ENCODE measurements at regions of chr5 and their contacts with region 1.

Region 1: DNA sequence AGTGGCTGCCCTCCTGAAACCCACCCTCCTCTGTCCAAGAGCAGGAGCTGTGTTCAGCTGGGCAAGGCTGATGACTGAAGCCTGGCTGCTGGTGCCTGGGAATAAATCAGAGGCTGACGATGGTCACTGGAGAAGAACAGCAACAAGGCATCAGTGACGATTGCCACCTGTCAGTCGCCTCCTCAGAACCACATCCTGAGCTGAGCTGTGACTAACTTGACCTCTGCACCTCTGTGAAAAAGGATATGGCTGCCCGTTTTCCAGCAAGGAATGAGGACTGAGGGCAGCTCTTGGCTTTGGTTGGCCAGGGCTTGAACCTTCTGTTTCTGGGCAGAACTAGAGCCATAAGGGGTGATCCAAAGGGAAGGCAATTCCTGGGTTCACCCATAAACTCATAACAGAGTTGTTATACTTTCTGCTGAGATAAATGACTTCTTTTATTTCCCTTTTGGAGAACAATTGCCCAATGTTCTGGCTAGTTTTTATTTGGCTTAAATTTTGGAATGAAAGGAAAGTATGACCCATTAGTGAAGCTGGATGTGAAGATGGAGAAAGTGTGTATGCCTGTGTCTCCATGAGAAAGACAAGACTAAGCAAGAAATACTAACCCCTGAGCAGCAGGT is 40.1 kb downstream of the TRIP13 start:
- DNase-seq: peak; percentile 40
- ATAC-seq: peak; percentile 82
- H3K4me3 ChIP-seq: no peak overlapping the region
- H3K27ac ChIP-seq: peak overlapping the region; percentile 1; the same call in 1 of the 2 replicates
- H3K4me1 ChIP-seq: peaks cover 7% of the 10 kb centered on the region; the same call in 1 of the 2 replicates
- H3K27me3 ChIP-seq: peaks cover 42% of the 10 kb centered on the region
- CTCF ChIP-seq: no peak
- POLR2A ChIP-seq: no peak
- RAD21 ChIP-seq: no peak

Region 2: DNA sequence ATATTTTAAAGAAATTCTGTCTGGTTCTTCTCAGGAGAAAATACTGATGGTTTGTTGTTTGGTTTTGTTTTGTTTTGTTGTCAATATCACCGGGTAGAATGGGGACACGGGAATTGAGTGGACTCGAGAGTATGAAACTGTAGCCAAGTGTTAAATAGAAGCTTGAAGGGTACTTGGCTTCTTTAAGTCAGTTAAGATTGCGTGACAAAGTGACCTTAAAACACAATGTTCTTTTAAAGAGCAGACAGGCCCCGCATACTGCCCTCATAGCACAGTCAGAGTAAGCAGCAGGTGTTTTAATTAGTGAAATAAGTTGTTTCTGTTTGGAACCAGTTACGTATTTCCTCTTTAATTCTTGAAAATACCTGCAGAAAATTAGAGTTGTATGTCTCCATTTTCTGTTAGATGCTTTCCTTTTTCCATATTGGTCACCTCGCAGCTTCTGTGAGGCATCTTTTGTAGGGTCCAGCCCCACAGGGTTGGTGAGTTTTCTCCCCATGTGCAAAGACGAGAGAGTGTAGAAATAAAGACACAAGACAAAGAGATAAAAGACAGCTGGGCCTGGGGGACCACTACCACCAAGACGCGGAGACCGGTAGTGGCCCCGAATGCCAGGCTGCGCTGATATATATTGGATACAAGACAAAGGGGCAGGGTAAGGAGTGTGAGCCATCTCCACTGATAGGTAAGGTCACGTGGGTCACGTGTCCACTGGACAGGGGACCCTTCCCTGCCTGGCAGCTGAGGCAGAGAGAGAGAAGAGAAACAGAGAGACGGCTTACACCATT is 30.4 kb before region 1 on chr5:
- CTCF ChIA-PET with region 1: no interaction called
- POLR2A ChIA-PET with region 1: no interaction called
- dilution Hi-C with region 1: no loop called
- in situ Hi-C with region 1: no loop called
- intact Hi-C with region 1: no loop called
- DNase-seq: no peak
- ATAC-seq: no peak
- H3K4me3 ChIP-seq: no peak overlapping the region
- H3K27ac ChIP-seq: no peak overlapping the region
- H3K4me1 ChIP-seq: no peaks in the 10 kb centered on the region
- H3K27me3 ChIP-seq: no peaks in the 10 kb centered on the region
- CTCF ChIP-seq: no peak
- POLR2A ChIP-seq: no peak
- RAD21 ChIP-seq: no peak

Region 3: DNA sequence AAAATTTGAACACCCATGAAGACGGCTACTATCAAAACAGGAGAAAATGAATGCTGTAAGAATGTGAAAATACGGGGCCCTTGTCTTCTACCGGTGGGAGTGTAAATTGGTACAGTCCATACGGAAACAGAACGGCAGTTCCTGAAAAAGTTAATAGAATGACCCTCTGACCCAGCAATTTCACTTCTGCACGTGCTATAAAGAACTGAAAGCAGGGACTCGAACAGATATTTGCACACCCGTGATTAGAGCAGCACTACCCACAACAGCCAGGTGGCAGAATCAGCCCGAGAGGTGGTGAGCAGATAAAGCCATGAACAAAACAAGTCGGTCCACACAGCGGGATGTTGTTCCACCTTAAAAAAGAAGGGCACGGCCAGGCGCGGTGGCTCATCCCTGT is 201.7 kb after region 1 on chr5:
- CTCF ChIA-PET with region 1: interaction called, 3 read pairs
- POLR2A ChIA-PET with region 1: no interaction called
- dilution Hi-C with region 1: no loop called
- in situ Hi-C with region 1: loop called (anchors 10 kb)
- intact Hi-C with region 1: no loop called
- DNase-seq: no peak
- ATAC-seq: no peak
- H3K4me3 ChIP-seq: no peak overlapping the region
- H3K27ac ChIP-seq: no peak overlapping the region
- H3K4me1 ChIP-seq: no peaks in the 10 kb centered on the region
- H3K27me3 ChIP-seq: peaks cover 41% of the 10 kb centered on the region; the same call in 1 of the 2 replicates
- CTCF ChIP-seq: no peak
- POLR2A ChIP-seq: no peak
- RAD21 ChIP-seq: no peak

Region 4: GRCh38 chr5:1140171-1140817 is 207.6 kb after region 1 on chr5:
- CTCF ChIA-PET with region 1: interaction called, 8 read pairs
- POLR2A ChIA-PET with region 1: no interaction called
- dilution Hi-C with region 1: no loop called
- in situ Hi-C with region 1: loop called (anchors 10 kb)
- intact Hi-C with region 1: loop called (anchors 1 kb)
- DNase-seq: peak; percentile 31
- ATAC-seq: peak; percentile 85
- H3K4me3 ChIP-seq: no peak overlapping the region
- H3K27ac ChIP-seq: no peak overlapping the region
- H3K4me1 ChIP-seq: no peaks in the 10 kb centered on the region
- H3K27me3 ChIP-seq: peaks cover 32% of the 10 kb centered on the region; the same call in 1 of the 2 replicates
- CTCF ChIP-seq: peak; percentile 60
- POLR2A ChIP-seq: no peak
- RAD21 ChIP-seq: peak; percentile 65

Region 5: DNA sequence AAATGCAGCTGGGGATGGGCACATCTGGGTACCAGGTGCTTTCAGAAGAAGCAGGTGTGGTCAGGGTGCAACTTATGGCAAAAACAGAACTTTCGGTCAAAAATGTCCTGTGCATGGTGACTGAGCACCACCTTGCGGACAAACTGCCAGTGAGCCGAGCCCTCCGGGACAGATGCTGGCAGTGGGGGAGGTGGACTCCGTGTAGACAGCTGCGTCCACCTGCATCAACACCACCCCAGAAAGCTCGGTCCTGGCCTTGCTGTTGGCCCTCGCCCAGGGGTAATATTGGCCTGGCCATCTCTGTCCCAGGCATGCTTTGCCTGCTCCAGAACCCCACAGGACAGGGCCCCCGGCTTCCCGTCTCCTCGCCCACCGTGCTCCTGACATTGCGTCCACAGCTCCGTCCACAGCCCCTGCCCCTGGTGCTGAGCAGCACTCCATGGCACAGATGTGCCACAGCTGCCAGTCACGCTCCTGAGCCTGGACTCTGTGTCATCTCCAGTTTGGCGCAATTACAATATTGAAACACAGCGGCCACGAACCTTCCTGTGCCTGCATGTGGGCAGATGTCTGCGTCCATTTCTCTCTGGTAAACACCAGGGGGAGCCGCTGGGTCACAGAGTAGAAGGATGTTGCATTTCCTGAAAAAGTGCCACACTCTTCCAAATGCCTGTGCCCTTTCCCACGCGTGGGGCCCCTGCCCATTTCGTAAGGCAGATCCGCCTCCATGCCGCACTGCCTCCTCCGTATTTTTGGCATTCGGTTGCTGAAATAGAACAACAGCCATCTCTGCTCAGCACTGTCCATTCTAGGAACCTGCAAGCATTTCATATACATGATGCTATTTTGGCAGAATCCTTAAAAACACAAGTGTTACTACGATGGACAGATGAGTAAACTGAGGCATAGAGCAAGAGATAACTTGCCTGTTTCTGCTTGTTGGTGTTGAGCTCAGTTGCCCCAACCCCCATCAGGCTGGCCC is 235.3 kb after region 1 on chr5:
- CTCF ChIA-PET with region 1: interaction called, 10 read pairs
- POLR2A ChIA-PET with region 1: no interaction called
- dilution Hi-C with region 1: no loop called
- in situ Hi-C with region 1: loop called (anchors 10 kb)
- intact Hi-C with region 1: no loop called
- DNase-seq: peak; percentile 61
- ATAC-seq: peak; percentile 95
- H3K4me3 ChIP-seq: no peak overlapping the region
- H3K27ac ChIP-seq: no peak overlapping the region
- H3K4me1 ChIP-seq: peaks cover 2% of the 10 kb centered on the region; the same call in 1 of the 2 replicates
- H3K27me3 ChIP-seq: peaks cover 14% of the 10 kb centered on the region; the same call in 1 of the 2 replicates
- CTCF ChIP-seq: peak; percentile 79
- POLR2A ChIP-seq: no peak
- RAD21 ChIP-seq: peak; percentile 65

Region 6: DNA sequence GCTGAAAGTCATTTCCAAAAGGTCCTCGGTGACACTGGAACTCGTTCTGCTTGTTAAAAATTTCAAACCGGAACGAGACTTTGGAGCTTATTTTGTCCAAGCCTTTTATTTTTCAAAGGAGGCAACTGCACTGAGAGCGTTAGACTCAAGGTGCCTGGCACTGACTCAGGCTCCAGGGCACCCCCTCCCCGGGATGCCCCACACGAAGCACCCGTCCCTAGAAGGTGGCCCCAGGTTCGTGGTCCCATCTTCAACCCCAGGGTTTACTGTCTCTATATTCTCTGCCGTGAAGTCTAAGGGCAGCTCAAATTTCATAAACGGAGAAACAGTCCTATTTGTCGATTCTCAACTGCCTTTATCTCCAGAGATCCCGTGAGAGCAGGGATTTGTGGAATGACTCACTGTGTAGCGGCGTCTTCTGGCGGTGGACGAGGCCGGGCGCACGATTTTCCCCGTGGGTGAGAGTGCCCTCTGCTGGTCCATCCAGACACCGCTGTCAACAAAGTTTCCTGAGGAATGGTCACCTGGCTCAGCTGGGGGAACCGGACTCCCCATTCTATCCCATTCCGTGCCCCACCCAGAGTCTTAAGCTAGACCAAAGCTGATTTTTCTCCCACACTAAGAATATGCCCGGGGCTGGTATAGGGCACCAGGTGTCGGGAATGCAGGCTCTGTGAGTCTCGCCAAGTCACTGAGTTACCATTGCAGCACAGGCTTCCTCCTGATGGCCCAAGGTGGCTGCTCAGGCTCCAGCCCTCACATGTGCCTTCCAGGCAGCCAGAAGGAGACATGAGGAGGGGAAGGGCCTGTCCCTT is 241.6 kb after region 1 on chr5:
- CTCF ChIA-PET with region 1: no interaction called
- POLR2A ChIA-PET with region 1: no interaction called
- dilution Hi-C with region 1: no loop called
- in situ Hi-C with region 1: loop called (anchors 10 kb)
- intact Hi-C with region 1: no loop called
- DNase-seq: peak; percentile 74
- ATAC-seq: peak; percentile 86
- H3K4me3 ChIP-seq: no peak overlapping the region
- H3K27ac ChIP-seq: no peak overlapping the region
- H3K4me1 ChIP-seq: no peaks in the 10 kb centered on the region
- H3K27me3 ChIP-seq: peaks cover 5% of the 10 kb centered on the region; the same call in 1 of the 2 replicates
- CTCF ChIP-seq: peak; percentile 67
- POLR2A ChIP-seq: no peak
- RAD21 ChIP-seq: peak; percentile 60

Region 7: GRCh38 chr5:1199649-1200494 is 267.1 kb after region 1 on chr5:
- CTCF ChIA-PET with region 1: no interaction called
- POLR2A ChIA-PET with region 1: no interaction called
- dilution Hi-C with region 1: no loop called
- in situ Hi-C with region 1: no loop called
- intact Hi-C with region 1: no loop called
- DNase-seq: no peak
- ATAC-seq: no peak
- H3K4me3 ChIP-seq: no peak overlapping the region
- H3K27ac ChIP-seq: no peak overlapping the region
- H3K4me1 ChIP-seq: peaks cover under 1% of the 10 kb centered on the region; the same call in 1 of the 2 replicates
- H3K27me3 ChIP-seq: peaks cover 6% of the 10 kb centered on the region; the same call in 1 of the 2 replicates
- CTCF ChIP-seq: no peak
- POLR2A ChIP-seq: no peak
- RAD21 ChIP-seq: no peak

Region 8: DNA sequence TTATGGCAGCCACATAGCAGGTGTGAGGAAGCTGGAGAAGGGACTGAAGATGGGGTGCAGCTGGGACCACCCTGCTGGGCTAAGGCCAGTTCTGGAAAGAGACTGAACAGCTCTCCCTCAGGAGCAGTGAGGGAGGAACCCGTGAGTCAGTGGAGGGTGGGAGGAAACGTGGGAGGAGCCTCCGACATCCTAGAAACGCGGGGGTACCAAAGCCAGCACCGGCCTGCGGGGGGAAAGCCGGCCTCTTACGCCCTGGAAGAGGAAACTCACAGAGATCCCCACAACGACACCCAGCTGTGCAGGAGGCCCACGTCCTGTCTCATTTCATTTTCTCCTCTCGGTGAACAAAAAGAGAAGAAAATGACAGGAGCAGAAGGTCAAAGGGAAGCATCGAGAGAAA is 1135.8 kb after region 1 on chr5:
- CTCF ChIA-PET with region 1: no interaction called
- POLR2A ChIA-PET with region 1: no interaction called
- dilution Hi-C with region 1: no loop called
- in situ Hi-C with region 1: no loop called
- intact Hi-C with region 1: no loop called
- DNase-seq: no peak
- ATAC-seq: no peak
- H3K4me3 ChIP-seq: no peak overlapping the region
- H3K27ac ChIP-seq: no peak overlapping the region
- H3K4me1 ChIP-seq: no peaks in the 10 kb centered on the region
- H3K27me3 ChIP-seq: no peaks in the 10 kb centered on the region
- CTCF ChIP-seq: no peak
- POLR2A ChIP-seq: no peak
- RAD21 ChIP-seq: no peak